A673 (cell line): ENCODE measurements at regions of chr14 and their contacts with region 1.

Region 1: DNA sequence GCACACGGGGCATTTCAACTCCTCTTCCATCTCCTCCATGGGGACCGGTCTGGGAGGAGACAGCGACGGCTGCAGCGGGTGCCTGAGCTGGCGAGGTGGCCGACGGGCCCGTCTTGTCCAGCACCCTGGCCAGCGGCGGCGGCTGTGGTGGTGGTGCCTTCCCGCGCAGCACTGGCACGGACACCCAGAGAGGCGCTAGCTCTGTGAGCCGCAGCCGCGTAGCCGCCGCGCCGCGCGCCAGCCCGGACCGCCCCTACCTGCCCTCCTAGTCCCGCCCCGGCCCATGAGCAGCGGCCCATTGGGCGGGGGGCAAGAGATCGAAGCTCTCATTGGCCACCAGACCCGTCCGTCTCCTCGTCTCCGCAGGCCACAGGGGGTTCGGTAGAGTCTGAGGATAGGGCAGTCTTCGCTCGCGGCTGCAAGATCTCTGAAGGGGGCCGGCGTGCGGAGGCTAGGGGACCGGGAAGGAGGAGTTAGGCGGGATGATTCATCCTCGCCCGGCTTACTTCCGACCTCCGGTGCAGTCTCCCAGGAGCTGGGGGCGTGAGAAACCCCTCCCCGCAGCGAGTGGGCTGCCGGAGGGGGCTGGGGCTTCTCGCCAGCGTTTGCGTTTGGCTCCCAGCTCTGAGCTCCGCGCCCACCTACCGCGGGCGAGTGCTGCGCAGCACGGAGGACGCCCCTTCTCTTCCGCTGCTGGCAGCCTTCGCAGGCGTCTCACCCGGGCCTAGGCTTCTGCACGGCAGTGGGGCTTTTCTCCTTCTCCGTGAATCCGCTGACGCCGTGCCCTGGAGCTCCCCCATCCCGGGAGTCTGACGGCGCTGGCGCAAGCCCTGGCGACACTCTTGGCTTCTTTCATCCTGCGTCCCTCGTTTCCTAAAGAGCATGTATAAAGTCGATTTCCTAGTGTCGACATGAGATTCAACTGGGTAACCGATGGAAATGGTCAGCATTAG is at the start of gene TRIM9:
- DNase-seq: peak; percentile 99
- H3K4me3 ChIP-seq: peak within 1 kb of the TSS; percentile 69
- H3K27ac ChIP-seq: peak within 1 kb of the TSS; percentile 73
- H3K4me1 ChIP-seq: peaks cover 14% of the 10 kb centered on the region
- H3K27me3 ChIP-seq: no peaks in the 10 kb centered on the region
- CTCF ChIP-seq: no peak
- total RNA-seq, gene TRIM9: 6.8 and 9.8 TPM in 2 replicates

Region 2: GRCh38 chr14:50954811-50955372 is 140.3 kb before region 1 on chr14:
- CTCF ChIA-PET with region 1: no interaction called
- POLR2A ChIA-PET with region 1: interaction called, 4 read pairs
- intact Hi-C with region 1: loop called (anchors 10 kb)
- DNase-seq: peak; percentile 87
- H3K4me3 ChIP-seq: no peak overlapping the region
- H3K27ac ChIP-seq: peak overlapping the region; percentile 78
- H3K4me1 ChIP-seq: peaks cover 17% of the 10 kb centered on the region
- H3K27me3 ChIP-seq: no peaks in the 10 kb centered on the region
- CTCF ChIP-seq: peak; percentile 83

Region 3: GRCh38 chr14:51023964-51024363 is 71.2 kb before region 1 on chr14:
- CTCF ChIA-PET with region 1: no interaction called
- POLR2A ChIA-PET with region 1: no interaction called
- intact Hi-C with region 1: no loop called
- DNase-seq: no peak
- H3K4me3 ChIP-seq: no peak overlapping the region
- H3K27ac ChIP-seq: no peak overlapping the region
- H3K4me1 ChIP-seq: no peaks in the 10 kb centered on the region
- H3K27me3 ChIP-seq: no peaks in the 10 kb centered on the region
- CTCF ChIP-seq: no peak

Region 4: DNA sequence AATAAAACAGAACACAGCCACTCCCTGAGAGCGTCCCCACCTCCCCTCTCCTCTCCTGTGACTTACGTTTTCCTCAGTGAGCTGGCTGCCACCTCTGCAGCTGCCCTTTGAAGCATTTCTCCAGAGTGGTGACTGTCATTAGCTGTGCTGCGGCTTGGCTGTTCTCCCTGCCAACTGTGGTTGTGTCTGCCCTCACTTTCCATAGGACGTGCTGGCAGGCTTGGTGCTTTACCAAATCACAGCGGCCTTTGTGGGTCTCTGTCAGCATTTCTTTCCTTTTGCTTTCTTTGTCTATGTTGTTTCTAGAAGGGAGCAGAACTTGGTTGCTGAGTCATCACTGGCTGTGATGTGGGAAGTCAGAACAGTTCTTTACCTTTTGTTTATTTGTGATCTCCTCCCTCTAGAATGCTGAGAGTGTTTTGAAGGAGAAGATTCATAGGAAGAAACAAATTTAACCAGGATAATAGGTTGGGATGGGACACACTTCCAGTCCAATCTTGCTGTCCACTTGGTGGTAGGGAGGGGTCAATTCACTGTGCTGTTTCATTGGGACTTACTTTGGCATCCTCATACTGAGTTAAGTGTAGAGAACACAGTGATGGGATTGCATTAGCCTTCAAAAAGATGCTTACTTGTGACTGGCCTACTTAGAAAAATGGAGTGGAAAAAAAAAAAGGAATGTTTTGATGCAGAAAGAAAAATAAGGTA is 233.0 kb after region 1 on chr14:
- CTCF ChIA-PET with region 1: no interaction called
- POLR2A ChIA-PET with region 1: no interaction called
- intact Hi-C with region 1: no loop called
- DNase-seq: no peak
- H3K4me3 ChIP-seq: no peak overlapping the region
- H3K27ac ChIP-seq: no peak overlapping the region
- H3K4me1 ChIP-seq: no peaks in the 10 kb centered on the region
- H3K27me3 ChIP-seq: no peaks in the 10 kb centered on the region
- CTCF ChIP-seq: no peak